ENCODE measurements at regions of chr19 and their contacts with region 1.

Region 1: GRCh38 chr19:40777937-40778705 is at the start of gene RAB4B:
- DNase-seq: peak; percentile 100
- H3K4me3 ChIP-seq: peak within 1 kb of the TSS; percentile 66
- H3K27ac ChIP-seq: peak within 1 kb of the TSS; percentile 100
- H3K4me1 ChIP-seq: peaks cover 12% of the 10 kb centered on the region
- H3K27me3 ChIP-seq: no peaks in the 10 kb centered on the region
- CTCF ChIP-seq: no peak
- total RNA-seq, gene RAB4B: 9.1 and 14.6 TPM in 2 replicates

Region 2: GRCh38 chr19:39759457-39760184 is 1018.5 kb before region 1 on chr19:
- CTCF ChIA-PET with region 1: no interaction called
- POLR2A ChIA-PET with region 1: interaction called, 12 read pairs
- intact Hi-C with region 1: no loop called
- DNase-seq: no peak
- H3K4me3 ChIP-seq: no peak overlapping the region
- H3K27ac ChIP-seq: no peak overlapping the region
- H3K4me1 ChIP-seq: no peaks in the 10 kb centered on the region
- H3K27me3 ChIP-seq: peaks cover 69% of the 10 kb centered on the region
- CTCF ChIP-seq: no peak

Region 3: GRCh38 chr19:40750059-40750873 is 27.9 kb before region 1 on chr19 and contains the start of gene ACTMAP:
- CTCF ChIA-PET with region 1: interaction called, 3 read pairs
- POLR2A ChIA-PET with region 1: interaction called, 3 read pairs
- intact Hi-C with region 1: loop called (anchors 1 kb)
- DNase-seq: peak; percentile 100
- H3K4me3 ChIP-seq: peak within 1 kb of the TSS; percentile 90
- H3K27ac ChIP-seq: peak within 1 kb of the TSS; percentile 97
- H3K4me1 ChIP-seq: peaks cover 8% of the 10 kb centered on the region
- H3K27me3 ChIP-seq: no peaks in the 10 kb centered on the region
- CTCF ChIP-seq: no peak
- total RNA-seq, gene ACTMAP: 17.1 and 20.8 TPM in 2 replicates

Region 4: DNA sequence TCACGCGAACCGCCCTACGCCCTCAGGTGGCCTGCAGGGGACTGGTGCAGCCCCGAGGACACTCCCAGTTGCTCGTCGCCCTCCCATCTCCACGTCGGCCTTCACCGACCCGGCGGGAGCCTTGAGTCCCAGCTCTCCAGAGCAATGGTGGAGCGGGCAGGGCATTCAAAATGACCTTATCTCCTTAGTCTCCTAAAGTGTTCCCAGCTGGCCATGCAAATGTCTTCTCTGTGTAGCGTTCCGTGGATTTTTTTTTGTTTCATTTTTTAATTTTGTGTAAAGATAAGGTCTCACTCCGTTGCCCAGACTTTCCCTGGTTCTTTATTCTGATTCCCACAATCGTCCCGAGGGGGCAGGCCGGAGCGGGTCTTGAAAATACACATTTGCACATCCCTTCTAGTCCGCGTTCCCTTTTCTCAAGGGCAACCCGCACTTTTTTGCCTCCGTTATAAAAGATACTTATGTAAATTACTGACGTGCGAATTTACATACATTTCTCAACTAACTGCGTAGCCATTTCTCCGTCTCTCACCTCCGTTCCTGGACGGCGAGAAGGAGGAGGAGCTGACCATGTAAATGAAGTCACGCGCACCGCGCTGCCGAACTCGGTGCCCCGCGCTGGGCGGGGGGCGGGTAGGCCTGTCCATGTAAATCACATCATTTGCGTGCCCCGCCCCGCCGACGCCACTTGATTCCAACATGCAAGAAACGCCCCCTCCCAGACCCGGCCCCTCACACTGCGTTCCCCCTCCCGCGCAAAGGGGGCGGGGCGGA is 20.3 kb after region 1 on chr19:
- CTCF ChIA-PET with region 1: interaction called, 7 read pairs
- POLR2A ChIA-PET with region 1: interaction called, 3 read pairs
- intact Hi-C with region 1: loop called (anchors 1 kb)
- DNase-seq: peak; percentile 100
- H3K4me3 ChIP-seq: peak overlapping the region; percentile 50
- H3K27ac ChIP-seq: peak overlapping the region; percentile 62
- H3K4me1 ChIP-seq: peaks cover 37% of the 10 kb centered on the region
- H3K27me3 ChIP-seq: no peaks in the 10 kb centered on the region
- CTCF ChIP-seq: peak; percentile 57

Region 5: DNA sequence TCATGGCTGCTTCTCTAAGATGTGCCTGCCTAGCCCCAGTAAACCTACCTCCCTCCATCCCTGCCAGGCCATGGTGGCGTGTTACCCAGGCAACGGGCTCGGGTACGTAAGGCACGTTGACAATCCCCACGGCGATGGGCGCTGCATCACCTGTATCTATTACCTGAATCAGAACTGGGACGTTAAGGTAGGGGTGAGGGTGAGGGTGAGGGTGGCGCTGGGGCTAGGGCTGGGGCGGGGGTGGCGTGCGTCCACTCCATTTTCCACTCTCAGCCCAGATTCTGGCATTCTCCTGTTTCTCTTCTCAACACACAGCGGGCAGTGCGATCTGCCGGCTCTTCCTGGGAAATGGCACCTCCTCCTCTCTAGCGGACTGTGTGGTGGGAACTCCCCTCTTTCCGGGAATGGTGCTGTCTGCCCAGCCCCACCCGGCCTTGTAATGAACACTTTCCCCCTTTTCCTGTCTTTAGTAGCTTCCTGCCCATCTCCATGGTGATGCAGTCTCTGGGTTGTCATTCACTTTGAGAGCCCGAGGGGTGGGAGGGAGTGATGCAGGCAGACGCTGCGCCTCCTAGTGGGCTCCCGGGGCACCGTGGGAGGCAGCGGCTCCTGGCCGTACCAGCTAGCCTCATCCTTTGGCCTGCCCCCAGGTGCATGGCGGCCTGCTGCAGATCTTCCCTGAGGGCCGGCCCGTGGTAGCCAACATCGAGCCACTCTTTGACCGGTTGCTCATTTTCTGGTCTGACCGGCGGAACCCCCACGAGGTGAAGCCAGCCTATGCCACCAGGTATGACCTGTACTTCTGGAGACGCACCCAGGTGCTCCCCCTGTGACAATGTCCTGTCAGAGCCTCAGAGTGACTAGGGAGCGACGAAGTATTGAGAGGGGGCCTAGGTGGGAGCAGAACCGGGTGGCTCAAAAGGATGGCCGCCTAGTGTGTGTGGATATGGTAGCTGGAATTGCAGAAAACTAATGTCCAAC is 28.7 kb after region 1 on chr19:
- CTCF ChIA-PET with region 1: interaction called, 17 read pairs
- POLR2A ChIA-PET with region 1: interaction called, 3 read pairs
- intact Hi-C with region 1: no loop called
- DNase-seq: peak; percentile 99
- H3K4me3 ChIP-seq: peak overlapping the region; percentile 20
- H3K27ac ChIP-seq: peak overlapping the region; percentile 47
- H3K4me1 ChIP-seq: peaks cover 53% of the 10 kb centered on the region
- H3K27me3 ChIP-seq: no peaks in the 10 kb centered on the region
- CTCF ChIP-seq: peak; percentile 100

Region 6: GRCh38 chr19:41288673-41289505 is 510.8 kb after region 1 on chr19:
- CTCF ChIA-PET with region 1: no interaction called
- POLR2A ChIA-PET with region 1: interaction called, 18 read pairs
- intact Hi-C with region 1: no loop called
- DNase-seq: no peak
- H3K4me3 ChIP-seq: no peak overlapping the region
- H3K27ac ChIP-seq: no peak overlapping the region
- H3K4me1 ChIP-seq: no peaks in the 10 kb centered on the region
- H3K27me3 ChIP-seq: no peaks in the 10 kb centered on the region
- CTCF ChIP-seq: no peak

Measured in A673 (cell line).